ENCODE measurements at regions of chr5 and their contacts with region 1.

Region 1: DNA sequence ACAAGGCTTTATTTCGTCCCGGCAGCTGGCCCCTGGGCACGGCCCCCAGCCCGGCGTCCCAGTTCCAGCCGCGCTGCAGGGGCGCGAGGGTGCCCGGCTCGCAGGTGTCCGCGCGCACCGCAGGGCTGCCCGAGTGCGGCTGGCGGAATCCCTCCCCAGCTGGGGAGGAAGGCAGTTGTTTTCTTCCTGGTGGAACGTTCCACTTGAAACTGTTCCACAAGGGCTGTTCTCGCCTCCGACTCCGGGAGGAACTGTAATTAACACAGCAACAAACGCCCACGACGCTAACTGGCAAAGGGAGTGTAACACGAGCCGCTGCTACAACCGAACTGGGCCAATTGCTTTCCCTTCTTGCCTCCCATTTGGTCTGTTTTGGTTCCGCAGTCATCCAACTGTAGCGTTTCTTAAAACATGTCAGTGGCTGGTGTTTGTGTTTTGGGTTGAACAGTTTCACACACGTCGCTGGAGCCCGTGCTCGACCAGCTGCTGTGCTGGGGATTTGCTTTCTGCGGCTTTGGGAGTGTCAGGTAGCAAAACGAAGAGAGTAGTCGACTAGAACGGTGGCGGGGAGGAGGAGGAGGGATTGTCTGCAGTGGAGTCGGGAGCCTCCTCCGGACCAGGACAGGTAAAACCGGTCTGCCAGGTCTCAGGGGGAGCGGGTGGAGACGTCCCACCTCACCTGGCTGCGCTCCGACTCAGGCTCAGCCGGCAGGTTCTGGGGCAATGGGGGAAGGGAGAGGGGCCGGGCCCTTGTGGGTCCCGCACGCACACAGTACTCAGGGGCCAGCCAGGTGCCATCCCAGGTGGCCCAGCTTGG is 131.6 kb upstream of the NIPBL start:
- DNase-seq: peak; percentile 8
- H3K4me3 Mint-ChIP-seq: peak overlapping the region; percentile 85
- H3K27ac Mint-ChIP-seq: no peak overlapping the region
- H3K4me1 Mint-ChIP-seq: peaks cover 18% of the 10 kb centered on the region
- H3K27me3 Mint-ChIP-seq: peaks cover 29% of the 10 kb centered on the region

Region 2: GRCh38 chr5:36363101-36363500 is 381.9 kb before region 1 on chr5:
- intact Hi-C with region 1: no loop called
- DNase-seq: no peak
- H3K4me3 Mint-ChIP-seq: no peak overlapping the region
- H3K27ac Mint-ChIP-seq: no peak overlapping the region
- H3K4me1 Mint-ChIP-seq: peaks cover 17% of the 10 kb centered on the region
- H3K27me3 Mint-ChIP-seq: no peaks in the 10 kb centered on the region

Region 3: DNA sequence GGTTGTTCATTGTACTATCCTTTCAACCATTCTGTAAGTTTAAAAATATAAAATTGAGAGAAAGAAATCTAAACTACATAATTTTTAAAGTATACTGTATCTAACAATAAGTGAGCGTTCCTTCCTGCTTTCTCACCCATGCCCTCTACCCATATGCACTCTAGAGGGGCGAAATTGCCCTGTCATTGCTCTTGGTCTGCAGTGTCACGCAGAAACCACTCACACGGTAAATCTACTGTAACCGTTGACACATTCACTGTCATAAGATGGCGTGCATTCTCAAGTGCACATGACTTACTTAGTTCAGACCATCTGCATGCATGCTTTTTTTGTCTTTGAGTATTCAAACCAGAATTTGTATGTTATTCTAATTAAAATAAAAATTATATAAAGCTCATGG is 75.9 kb after region 1 on chr5:
- intact Hi-C with region 1: no loop called
- DNase-seq: no peak
- H3K4me3 Mint-ChIP-seq: no peak overlapping the region
- H3K27ac Mint-ChIP-seq: no peak overlapping the region
- H3K4me1 Mint-ChIP-seq: no peaks in the 10 kb centered on the region
- H3K27me3 Mint-ChIP-seq: peaks cover 21% of the 10 kb centered on the region

Region 4: DNA sequence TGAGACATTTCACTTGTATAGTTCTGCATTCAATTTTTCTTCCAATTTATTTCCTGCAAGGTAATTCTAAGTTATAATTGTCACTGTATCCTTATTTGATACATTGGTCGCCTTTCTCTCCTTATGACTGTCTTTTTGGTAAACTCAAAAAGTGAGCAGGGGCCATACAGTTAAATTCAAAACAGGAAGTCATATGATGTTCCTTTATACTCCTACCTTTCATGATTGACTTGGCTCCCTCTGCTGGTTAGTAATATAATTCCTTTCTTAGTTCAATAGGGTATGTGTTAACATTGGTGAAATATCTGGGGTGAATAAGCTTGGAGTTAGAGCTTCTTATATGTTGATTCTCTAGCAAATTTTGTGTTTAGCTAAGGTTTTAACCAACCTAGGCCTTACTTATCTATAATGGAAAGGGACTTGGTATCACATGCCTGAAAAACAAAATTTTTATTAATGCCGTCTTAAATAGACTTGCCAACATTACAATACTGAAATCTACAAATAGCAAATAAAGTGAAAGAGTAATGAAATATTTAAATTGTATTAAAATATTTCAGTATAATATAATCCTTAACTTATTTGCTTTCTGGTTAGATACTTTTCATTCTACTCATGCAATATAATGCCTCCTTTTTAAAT is 125.5 kb after region 1 on chr5:
- intact Hi-C with region 1: loop called (anchors 1 kb)
- DNase-seq: no peak
- H3K4me3 Mint-ChIP-seq: no peak overlapping the region
- H3K27ac Mint-ChIP-seq: no peak overlapping the region
- H3K4me1 Mint-ChIP-seq: peaks cover 41% of the 10 kb centered on the region
- H3K27me3 Mint-ChIP-seq: peaks cover 3% of the 10 kb centered on the region

Region 5: DNA sequence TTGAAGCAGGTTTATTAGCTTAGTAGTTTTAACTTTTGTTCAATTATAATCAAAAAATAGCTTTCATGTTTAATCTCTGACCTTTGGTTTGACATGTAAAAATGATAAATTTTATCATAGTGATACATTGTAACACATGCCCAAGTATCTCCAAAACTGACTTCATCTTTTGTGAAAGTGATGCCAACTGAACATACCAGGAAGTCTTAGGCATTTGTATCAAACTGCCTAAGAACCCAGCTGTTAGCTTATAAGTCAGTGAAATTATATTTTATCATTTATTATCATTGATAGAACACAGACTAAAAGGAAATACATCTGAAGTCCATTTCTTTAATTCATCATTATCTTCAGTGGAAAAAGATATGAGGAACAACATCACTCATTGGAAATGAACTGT is 170.7 kb after region 1 on chr5:
- intact Hi-C with region 1: no loop called
- DNase-seq: no peak
- H3K4me3 Mint-ChIP-seq: no peak overlapping the region
- H3K27ac Mint-ChIP-seq: no peak overlapping the region
- H3K4me1 Mint-ChIP-seq: peaks cover 5% of the 10 kb centered on the region
- H3K27me3 Mint-ChIP-seq: no peaks in the 10 kb centered on the region

Region 6: GRCh38 chr5:37005946-37006540 is 261.1 kb after region 1 on chr5:
- intact Hi-C with region 1: loop called (anchors 1 kb)
- DNase-seq: no peak
- H3K4me3 Mint-ChIP-seq: no peak overlapping the region
- H3K27ac Mint-ChIP-seq: no peak overlapping the region
- H3K4me1 Mint-ChIP-seq: no peaks in the 10 kb centered on the region
- H3K27me3 Mint-ChIP-seq: no peaks in the 10 kb centered on the region

Measured in activated T-helper 1 cell treated with anti-CD3 and anti-CD28 coated beads, Interleukin-12 subunit alpha, Interleukin-12 subunit beta, Interleukin-2, Interleukin-4 antibody, amounts not matched to agents 30 ng/mL and 10 ng/mL and 1 ng/mL, durations not matched to agents 14 hours and 24 hours and 36 hours (primary cell).